CD4-positive, alpha-beta memory T cell (primary cell): ENCODE measurements at regions of chr12 and their contacts with region 1.

Region 1: GRCh38 chr12:76551482-76551888 is 8.1 kb downstream of the OSBPL8 start:
- DNase-seq: no peak
- H3K4me3 ChIP-seq: no peak overlapping the region
- H3K4me3 Mint-ChIP-seq: peak overlapping the region in 4 of 8 donors; percentile 9 to 60 (median 20)
- H3K27ac ChIP-seq: no peak overlapping the region
- H3K27ac Mint-ChIP-seq: peak overlapping the region in 2 of 7 donors; percentile 49 to 56
- H3K4me1 ChIP-seq: peaks cover 96% of the 10 kb centered on the region
- H3K4me1 Mint-ChIP-seq: peaks cover 71 to 97% (median 86%) of the 10 kb centered on the region in 4 donors
- H3K27me3 ChIP-seq: no peaks in the 10 kb centered on the region
- H3K27me3 Mint-ChIP-seq: no peaks in the 10 kb centered on the region

Region 2: DNA sequence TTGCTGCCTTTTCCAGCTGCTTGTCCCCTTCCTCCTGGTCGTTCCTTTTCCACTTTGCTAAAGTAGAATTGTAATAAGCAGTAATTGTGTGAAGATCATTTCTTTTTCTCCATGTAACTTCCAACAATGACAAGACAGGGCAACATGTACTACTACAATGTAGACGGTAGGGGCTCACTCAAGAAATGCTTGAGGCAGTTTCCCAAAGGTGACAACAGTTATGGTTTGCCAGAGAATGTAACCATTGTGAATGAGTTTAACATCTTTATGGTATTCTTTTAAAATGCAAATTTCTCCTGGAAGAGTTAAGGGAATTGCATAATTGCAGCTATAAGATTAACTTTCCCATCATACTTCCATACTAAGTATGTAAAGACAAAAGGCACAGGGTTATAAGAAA is 496.1 kb before region 1 on chr12:
- CTCF ChIA-PET with region 1: no interaction called
- POLR2A ChIA-PET with region 1: no interaction called
- intact Hi-C with region 1: no loop called
- DNase-seq: no peak
- H3K4me3 ChIP-seq: no peak overlapping the region
- H3K4me3 Mint-ChIP-seq: no peak overlapping the region
- H3K27ac ChIP-seq: no peak overlapping the region
- H3K27ac Mint-ChIP-seq: peak overlapping the region in 1 of 7 donors; percentile 19
- H3K4me1 ChIP-seq: no peaks in the 10 kb centered on the region
- H3K4me1 Mint-ChIP-seq: no peaks in the 10 kb centered on the region
- H3K27me3 ChIP-seq: no peaks in the 10 kb centered on the region
- H3K27me3 Mint-ChIP-seq: no peaks in the 10 kb centered on the region

Region 3: GRCh38 chr12:76539727-76540126 is 11.8 kb before region 1 on chr12:
- CTCF ChIA-PET with region 1: interaction called, 4 read pairs
- POLR2A ChIA-PET with region 1: no interaction called
- intact Hi-C with region 1: loop called (anchors 2 kb)
- DNase-seq: no peak
- H3K4me3 ChIP-seq: no peak overlapping the region
- H3K4me3 Mint-ChIP-seq: peak overlapping the region in 1 of 8 donors; percentile 8
- H3K27ac ChIP-seq: no peak overlapping the region
- H3K27ac Mint-ChIP-seq: peak overlapping the region in 2 of 7 donors; percentile 4 to 5
- H3K4me1 ChIP-seq: peaks cover 40% of the 10 kb centered on the region
- H3K4me1 Mint-ChIP-seq: peaks cover 40 to 65% (median 52%) of the 10 kb centered on the region in 4 donors
- H3K27me3 ChIP-seq: no peaks in the 10 kb centered on the region
- H3K27me3 Mint-ChIP-seq: no peaks in the 10 kb centered on the region

Region 4: GRCh38 chr12:76568130-76568529 is 16.6 kb after region 1 on chr12:
- CTCF ChIA-PET with region 1: no interaction called
- POLR2A ChIA-PET with region 1: no interaction called
- intact Hi-C with region 1: no loop called
- DNase-seq: no peak
- H3K4me3 ChIP-seq: no peak overlapping the region
- H3K4me3 Mint-ChIP-seq: no peak overlapping the region
- H3K27ac ChIP-seq: no peak overlapping the region
- H3K27ac Mint-ChIP-seq: peak overlapping the region in 2 of 7 donors; percentile 10 to 37
- H3K4me1 ChIP-seq: peaks cover 8% of the 10 kb centered on the region
- H3K4me1 Mint-ChIP-seq: peaks cover 6 to 8% (median 7%) of the 10 kb centered on the region in 4 donors
- H3K27me3 ChIP-seq: no peaks in the 10 kb centered on the region
- H3K27me3 Mint-ChIP-seq: no peaks in the 10 kb centered on the region

Region 5: DNA sequence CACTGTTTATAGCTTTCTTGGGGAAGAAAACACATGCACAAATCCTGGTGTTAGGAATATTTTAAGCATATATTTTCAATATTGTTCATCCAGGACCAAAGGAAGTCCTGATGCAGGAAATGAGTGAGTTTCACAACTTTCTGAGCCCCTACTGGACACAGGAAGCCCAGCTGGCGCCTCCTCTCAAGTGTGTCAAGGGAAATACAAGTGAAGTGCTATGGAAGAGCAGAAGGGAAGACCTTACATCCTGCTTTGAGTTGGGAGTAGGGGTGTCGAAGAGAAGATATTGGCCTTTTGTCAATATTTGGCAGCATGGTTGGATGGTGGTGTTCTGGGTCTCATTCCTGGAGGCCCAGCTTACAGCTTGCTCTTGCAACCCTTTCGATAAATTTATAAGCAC is 146.4 kb after region 1 on chr12:
- CTCF ChIA-PET with region 1: no interaction called
- POLR2A ChIA-PET with region 1: no interaction called
- intact Hi-C with region 1: no loop called
- DNase-seq: no peak
- H3K4me3 ChIP-seq: no peak overlapping the region
- H3K4me3 Mint-ChIP-seq: no peak overlapping the region
- H3K27ac ChIP-seq: no peak overlapping the region
- H3K27ac Mint-ChIP-seq: no peak overlapping the region
- H3K4me1 ChIP-seq: no peaks in the 10 kb centered on the region
- H3K4me1 Mint-ChIP-seq: no peaks in the 10 kb centered on the region
- H3K27me3 ChIP-seq: no peaks in the 10 kb centered on the region
- H3K27me3 Mint-ChIP-seq: peaks cover 3 to 6% of the 10 kb centered on the region in 2 donors